Dendritic cell treated with granulocyte-macrophage colony-stimulating factor and Interleukin-4, amounts not matched to agents 40 ng/mL and 50 ng/mL, for 4 days (primary cell): ENCODE measurements at regions of chr3 and their contacts with region 1.

Region 1: GRCh38 chr3:170180908-170181879 is at the start of gene PHC3:
- H3K4me3 Mint-ChIP-seq: peak within 1 kb of the TSS; percentile 98
- H3K27ac Mint-ChIP-seq: peak within 1 kb of the TSS; percentile 99
- H3K4me1 Mint-ChIP-seq: peaks cover 19% of the 10 kb centered on the region
- H3K27me3 Mint-ChIP-seq: no peaks in the 10 kb centered on the region

Region 2: DNA sequence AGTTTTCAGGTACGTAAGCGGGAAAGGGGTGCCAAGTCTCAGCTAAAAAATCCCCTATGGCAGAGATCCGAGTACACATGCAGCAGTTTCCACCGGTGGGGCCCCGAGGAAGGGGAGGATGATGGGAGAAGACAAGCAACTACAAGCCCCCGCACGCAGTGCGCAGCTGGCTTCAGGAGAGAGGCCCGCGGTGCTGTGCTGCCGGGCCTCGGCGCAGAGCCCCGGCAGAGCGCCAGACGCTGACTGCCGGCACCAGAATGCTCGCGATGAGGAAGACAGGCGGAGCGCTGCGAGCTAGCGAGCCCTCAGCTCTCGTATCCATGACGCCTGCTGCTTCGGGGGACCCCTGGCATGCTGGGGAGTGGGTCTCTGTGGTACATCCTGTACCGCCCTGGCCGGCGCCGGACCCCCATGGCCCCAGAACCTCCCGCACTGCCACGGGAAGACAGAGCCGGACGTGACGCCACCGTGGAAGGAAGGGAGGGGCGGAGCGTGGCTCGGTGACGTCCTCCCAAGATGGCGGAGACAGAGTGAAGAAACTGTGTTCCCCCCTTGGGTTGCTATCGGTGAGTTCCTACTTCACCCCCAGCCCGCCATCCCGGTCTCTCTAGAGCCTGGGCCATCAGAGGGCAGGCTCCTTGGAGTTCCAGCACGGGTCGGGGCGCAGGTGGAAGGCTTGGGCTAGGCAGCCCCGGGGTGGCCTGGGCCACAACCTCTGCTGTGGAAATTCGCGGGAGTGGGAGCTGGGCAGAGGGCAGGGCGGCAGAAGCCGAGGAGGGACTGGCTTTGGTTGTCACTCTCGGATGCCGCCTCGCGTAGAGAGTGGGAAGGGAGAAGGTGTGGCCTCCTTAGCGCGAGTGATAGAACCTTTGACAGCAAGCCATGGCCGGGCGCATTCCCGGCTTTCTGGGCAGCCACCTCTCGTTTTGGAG is 408.0 kb before region 1 on chr3 and contains the start of gene MYNN:
- intact Hi-C with region 1: loop called (anchors 2 kb)
- H3K4me3 Mint-ChIP-seq: peak within 1 kb of the TSS; percentile 93
- H3K27ac Mint-ChIP-seq: peak within 1 kb of the TSS; percentile 99
- H3K4me1 Mint-ChIP-seq: peaks cover 14% of the 10 kb centered on the region
- H3K27me3 Mint-ChIP-seq: no peaks in the 10 kb centered on the region

Region 3: GRCh38 chr3:170044795-170045244 is 136.4 kb before region 1 on chr3:
- intact Hi-C with region 1: loop called (anchors 2 kb)
- H3K4me3 Mint-ChIP-seq: peak overlapping the region; percentile 65
- H3K27ac Mint-ChIP-seq: peak overlapping the region; percentile 90
- H3K4me1 Mint-ChIP-seq: peaks cover 65% of the 10 kb centered on the region
- H3K27me3 Mint-ChIP-seq: no peaks in the 10 kb centered on the region

Region 4: DNA sequence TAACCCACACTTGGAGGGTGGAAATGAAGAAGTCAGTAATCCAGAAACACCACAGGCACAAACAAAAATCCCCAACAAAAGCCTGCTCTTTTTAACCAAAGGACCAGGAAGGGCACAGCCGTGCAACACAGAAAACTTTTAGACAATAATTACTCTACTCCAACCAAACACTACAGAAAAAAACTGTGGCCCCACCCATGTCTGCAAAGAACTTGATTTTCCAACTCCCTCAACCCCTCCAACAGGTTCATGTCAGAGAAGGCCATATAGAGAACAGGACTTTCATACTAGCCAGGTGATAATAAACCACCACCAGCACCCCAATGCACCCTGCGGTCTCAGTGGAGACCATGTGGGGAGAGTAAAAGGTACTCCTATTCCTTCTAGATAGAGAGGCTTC is 16.5 kb before region 1 on chr3:
- intact Hi-C with region 1: no loop called
- H3K4me3 Mint-ChIP-seq: no peak overlapping the region
- H3K27ac Mint-ChIP-seq: no peak overlapping the region
- H3K4me1 Mint-ChIP-seq: peaks cover 29% of the 10 kb centered on the region
- H3K27me3 Mint-ChIP-seq: no peaks in the 10 kb centered on the region

Region 5: DNA sequence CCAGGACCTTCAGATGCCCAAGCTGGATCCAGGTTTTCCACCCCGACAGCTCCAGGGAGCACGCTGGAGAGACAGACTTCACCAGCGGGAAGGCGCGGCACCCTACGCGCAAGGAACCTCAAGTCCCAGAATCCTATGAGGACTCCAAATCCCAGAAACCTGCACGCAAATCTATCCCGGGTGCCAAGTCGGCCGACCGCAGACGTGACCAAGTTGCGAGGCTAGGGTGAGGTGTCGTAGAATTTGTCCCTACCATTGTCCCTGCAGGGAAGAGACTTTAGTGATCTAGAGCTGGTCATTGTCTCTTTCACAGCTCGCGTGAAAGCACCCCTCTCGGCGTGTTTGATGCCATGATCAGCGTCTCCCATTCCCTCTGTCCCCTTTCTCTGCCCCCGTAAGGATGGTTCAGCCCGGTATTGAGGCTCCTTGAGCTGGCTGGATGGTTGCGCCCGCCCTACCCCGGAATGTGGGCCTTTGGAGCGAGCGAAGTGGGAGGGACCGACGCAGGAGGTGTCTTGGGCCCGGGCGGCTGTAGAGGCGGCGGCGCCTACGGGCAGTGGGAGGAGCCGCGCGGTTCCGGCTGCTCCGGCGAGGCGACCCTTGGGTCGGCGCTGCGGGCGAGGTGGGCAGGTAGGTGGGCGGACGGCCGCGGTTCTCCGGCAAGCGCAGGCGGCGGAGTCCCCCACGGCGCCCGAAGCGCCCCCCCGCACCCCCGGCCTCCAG is 40.9 kb after region 1 on chr3 and contains the start of gene PRKCI:
- intact Hi-C with region 1: loop called (anchors 2 kb)
- H3K4me3 Mint-ChIP-seq: peak within 1 kb of the TSS; percentile 79
- H3K27ac Mint-ChIP-seq: peak within 1 kb of the TSS; percentile 96
- H3K4me1 Mint-ChIP-seq: peaks cover 11% of the 10 kb centered on the region
- H3K27me3 Mint-ChIP-seq: no peaks in the 10 kb centered on the region

Region 6: DNA sequence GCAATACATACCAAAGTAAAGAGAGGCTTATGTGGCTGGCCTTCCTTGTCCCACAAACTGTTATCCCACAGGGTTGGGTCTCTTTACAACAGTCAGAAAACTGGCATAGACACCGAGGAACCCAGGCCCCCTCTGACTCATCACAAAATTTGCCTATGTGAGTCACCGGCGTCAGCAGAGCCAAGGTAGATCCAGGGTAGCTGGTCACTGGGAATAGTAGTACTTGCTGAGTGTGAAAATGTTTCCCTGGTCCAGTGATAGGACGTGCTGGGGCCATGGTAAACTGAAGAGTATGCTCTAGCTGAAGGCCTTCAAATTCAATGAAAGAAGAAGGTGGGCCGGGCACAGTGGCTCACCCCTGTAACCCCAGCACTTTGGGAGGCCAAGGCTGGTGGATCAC is 149.2 kb after region 1 on chr3:
- intact Hi-C with region 1: no loop called
- H3K4me3 Mint-ChIP-seq: no peak overlapping the region
- H3K27ac Mint-ChIP-seq: no peak overlapping the region
- H3K4me1 Mint-ChIP-seq: peaks cover 16% of the 10 kb centered on the region
- H3K27me3 Mint-ChIP-seq: peaks cover 3% of the 10 kb centered on the region

Region 7: DNA sequence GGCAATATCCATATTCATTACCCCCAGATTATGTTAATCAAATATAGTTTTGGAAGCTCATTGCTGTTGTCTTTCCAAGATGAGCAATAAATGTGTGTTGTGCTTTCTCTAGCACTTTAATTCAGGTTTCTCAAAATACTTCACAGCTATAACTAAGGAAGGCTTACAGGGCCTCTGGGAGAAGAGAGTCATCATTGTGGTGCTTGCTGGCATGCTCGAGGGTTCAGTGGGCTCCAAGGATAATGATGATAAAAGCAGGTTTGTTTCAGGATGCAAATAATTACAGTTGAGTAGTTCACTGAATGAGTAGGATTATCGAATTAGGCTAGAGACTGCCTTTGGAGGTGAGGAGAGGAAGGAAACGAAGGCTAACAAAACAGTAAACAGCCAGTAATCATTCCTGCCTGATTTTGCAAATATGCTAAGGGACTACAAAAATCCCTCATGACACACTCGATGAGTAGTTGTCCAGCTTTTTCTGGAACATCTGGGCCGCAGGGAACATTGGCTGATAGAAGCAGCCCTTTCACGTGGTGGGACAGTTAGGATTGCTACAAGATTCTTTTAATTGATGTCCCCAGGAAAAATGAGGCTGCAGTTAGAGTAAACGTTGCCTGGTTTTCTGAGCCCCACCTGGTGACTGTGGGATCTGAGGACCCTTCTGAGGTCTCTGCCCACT is 350.6 kb after region 1 on chr3:
- intact Hi-C with region 1: no loop called
- H3K4me3 Mint-ChIP-seq: no peak overlapping the region
- H3K27ac Mint-ChIP-seq: no peak overlapping the region
- H3K4me1 Mint-ChIP-seq: no peaks in the 10 kb centered on the region
- H3K27me3 Mint-ChIP-seq: no peaks in the 10 kb centered on the region